Esophagus muscularis mucosa (tissue), 4 donors: ENCODE measurements at regions of chr4 and their contacts with region 1.

Region 1: DNA sequence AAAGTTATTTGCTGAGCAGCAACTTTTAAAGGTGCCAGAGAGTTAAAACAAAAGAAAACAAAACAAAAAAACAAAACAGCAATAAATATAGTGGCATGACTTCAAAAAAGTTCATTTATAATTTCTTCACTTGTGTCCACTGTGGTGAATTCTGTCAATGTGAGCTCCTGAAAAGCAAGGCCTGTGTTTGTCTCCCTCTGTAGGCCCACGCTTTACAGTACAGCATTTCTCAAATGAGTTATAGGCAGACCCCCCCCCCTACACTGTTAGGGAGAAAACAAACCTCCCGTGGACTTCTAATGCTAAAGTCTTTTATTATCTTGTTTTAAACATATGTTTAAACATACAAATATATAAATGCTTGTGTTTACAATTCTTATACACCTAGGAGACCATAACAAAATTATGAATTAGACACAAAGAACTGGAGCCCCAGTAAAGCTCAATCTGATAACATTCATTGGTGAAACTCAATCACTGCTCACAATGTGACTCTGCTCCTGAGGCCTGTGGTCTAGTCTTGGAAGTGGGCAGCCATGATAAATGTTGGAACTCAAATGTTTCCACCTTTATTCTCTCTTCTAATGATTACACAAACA is 47.0 kb upstream of the SCOC start:
- DNase-seq: no peak
- H3K4me3 ChIP-seq: no peak overlapping the region
- H3K27ac ChIP-seq: no peak overlapping the region
- H3K4me1 ChIP-seq: no peaks in the 10 kb centered on the region
- H3K27me3 ChIP-seq: no peaks in the 10 kb centered on the region
- CTCF ChIP-seq: peak; percentile 60 to 79 (median 74)
- EP300 ChIP-seq: no peak
- POLR2A ChIP-seq: no peak

Region 2: GRCh38 chr4:140012688-140013486 is 313.6 kb before region 1 on chr4:
- intact Hi-C with region 1: loop called (anchors 10 kb)
- DNase-seq: no peak
- H3K4me3 ChIP-seq: peak overlapping the region in 3 of 4 donors; percentile 4 to 28 (median 9)
- H3K27ac ChIP-seq: no peak overlapping the region
- H3K4me1 ChIP-seq: peaks cover 0 to 9% (median 9%) of the 10 kb centered on the region in 4 donors
- H3K27me3 ChIP-seq: no peaks in the 10 kb centered on the region
- CTCF ChIP-seq: peak; percentile 52 to 62 (median 59)
- EP300 ChIP-seq: no peak
- POLR2A ChIP-seq: no peak

Region 3: DNA sequence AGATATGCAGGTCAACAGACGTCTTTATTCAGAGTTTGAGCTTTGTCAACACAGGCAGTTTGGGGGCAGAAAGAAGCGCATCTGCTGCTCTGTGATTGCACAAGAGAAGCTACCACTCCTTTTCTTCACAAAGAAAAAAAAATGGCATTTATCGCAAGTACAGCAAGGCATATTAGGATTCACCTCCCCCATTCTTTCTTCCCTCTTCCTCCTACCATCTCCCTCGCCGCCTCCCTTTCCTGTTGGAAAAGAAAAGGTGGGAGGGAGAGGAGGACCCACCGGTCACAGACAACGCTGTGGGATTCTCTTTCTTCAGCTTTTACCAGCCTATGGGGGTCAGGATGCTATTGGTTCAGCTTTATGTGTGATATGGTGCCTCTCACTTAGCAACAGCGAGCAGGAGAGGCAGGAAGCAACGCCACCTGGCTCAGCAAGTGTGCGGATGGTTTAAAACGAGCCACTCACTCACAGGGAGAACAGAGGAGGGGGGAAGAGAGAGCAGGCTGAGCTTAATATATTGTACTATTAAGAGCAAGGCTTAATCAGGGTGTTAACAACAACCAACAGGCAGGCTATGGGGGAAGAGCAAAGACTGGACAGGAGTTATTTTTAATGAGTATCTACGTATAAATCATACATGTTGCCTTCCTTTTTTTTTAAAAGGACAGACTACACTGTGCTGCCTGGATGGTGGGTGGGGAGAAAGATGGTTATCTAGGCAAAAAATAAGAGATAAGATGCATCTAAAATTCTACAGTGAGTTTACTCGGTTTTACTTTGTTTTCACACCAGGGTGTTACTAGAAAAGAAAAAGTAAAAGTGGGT is 277.3 kb before region 1 on chr4:
- intact Hi-C with region 1: loop called (anchors 10 kb)
- DNase-seq: no peak
- H3K4me3 ChIP-seq: peak overlapping the region; percentile 45 to 61 (median 53)
- H3K27ac ChIP-seq: peak overlapping the region; percentile 74 to 82 (median 76)
- H3K4me1 ChIP-seq: peaks cover 25 to 46% (median 44%) of the 10 kb centered on the region in 4 donors
- H3K27me3 ChIP-seq: no peaks in the 10 kb centered on the region
- CTCF ChIP-seq: peak; percentile 11 to 51 (median 43)
- EP300 ChIP-seq: no peak
- POLR2A ChIP-seq: no peak

Region 4: GRCh38 chr4:140260227-140260626 is 66.3 kb before region 1 on chr4:
- intact Hi-C with region 1: loop called (anchors 10 kb)
- DNase-seq: no peak
- H3K4me3 ChIP-seq: no peak overlapping the region
- H3K27ac ChIP-seq: no peak overlapping the region
- H3K4me1 ChIP-seq: peaks cover 0 to 19% (median 13%) of the 10 kb centered on the region in 4 donors
- H3K27me3 ChIP-seq: no peaks in the 10 kb centered on the region
- CTCF ChIP-seq: no peak
- EP300 ChIP-seq: no peak
- POLR2A ChIP-seq: no peak

Region 5: DNA sequence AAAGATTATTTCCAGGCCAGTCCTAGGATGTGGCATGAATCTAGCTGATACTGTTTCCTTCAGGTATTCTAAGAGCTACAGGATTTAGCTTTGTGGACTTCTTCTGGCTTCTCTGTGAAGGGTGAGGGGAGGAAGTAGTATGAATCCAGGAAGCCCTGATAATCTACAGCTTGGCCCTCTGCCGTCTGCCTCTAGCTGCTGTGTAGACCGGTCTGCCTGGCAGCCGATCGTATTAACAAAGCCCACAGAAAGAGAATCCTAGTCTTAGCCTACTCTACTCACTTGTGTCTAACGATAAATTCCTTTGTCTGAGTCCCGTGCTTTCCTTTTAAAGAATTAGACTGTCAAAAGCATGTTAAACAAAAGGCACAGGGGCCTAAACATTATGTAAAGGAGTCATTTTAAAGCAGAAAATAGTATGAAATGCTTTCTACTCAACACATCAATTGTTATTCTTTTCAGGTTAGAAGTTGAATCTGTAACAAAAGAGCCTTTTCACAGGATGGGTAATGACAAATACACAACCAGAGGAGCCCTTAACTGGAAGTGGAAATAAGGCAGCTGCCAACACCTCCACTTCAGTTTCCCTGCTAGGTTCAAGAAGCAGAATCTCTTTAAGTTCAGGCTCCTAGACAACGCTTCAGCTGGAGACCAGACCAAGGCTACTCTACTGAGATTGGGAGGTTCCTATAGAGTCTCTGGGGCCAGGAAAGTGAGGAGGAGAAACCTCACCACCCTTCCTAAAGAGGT is 291.2 kb after region 1 on chr4:
- intact Hi-C with region 1: no loop called
- DNase-seq: no peak
- H3K4me3 ChIP-seq: no peak overlapping the region
- H3K27ac ChIP-seq: no peak overlapping the region
- H3K4me1 ChIP-seq: no peaks in the 10 kb centered on the region
- H3K27me3 ChIP-seq: no peaks in the 10 kb centered on the region
- CTCF ChIP-seq: no peak
- EP300 ChIP-seq: no peak
- POLR2A ChIP-seq: no peak